ENCODE measurements at regions of chr9 and their contacts with region 1.

Region 1: DNA sequence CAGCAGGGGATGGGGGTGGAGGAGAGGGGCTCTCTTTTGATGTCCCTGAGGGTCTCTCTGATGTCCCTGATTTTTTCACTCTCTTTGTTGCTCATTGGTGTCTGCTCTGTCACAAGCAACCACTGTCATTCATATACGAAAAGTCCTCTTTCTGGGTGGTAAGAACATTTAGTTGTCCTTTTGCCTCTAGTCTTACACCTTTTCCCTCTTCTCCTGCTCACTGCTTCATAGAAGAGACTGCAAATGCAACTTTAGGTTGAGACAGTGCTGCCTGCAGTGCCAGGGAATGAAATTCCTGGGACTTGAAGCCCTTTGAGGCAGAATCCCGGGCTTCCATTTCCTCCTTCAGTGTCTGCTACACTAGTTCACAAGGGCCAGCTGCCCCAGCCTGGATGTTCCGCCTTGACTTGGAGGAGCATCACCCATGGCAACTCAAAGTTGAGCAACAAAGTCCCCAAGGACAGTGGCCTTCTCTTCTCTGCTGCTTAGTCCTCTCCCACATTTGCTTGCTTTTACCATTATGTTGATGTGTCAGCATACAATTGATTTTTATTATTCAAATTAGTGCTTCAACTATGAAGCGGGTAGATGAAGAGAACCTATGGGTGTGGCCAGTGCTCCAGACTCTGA is 94.7 kb upstream of the RUSC2 start:
- DNase-seq: no peak
- ATAC-seq: no peak
- H3K4me3 ChIP-seq: no peak overlapping the region
- H3K27ac ChIP-seq: no peak overlapping the region
- H3K4me1 ChIP-seq: no peaks in the 10 kb centered on the region
- H3K27me3 ChIP-seq: no peaks in the 10 kb centered on the region
- CTCF ChIP-seq: no peak

Region 2: GRCh38 chr9:35406183-35406956 is 11.2 kb after region 1 on chr9:
- CTCF ChIA-PET with region 1: no interaction called
- POLR2A ChIA-PET with region 1: interaction called, 14 read pairs
- intact Hi-C with region 1: no loop called
- DNase-seq: no peak
- ATAC-seq: no peak
- H3K4me3 ChIP-seq: no peak overlapping the region
- H3K27ac ChIP-seq: no peak overlapping the region
- H3K4me1 ChIP-seq: no peaks in the 10 kb centered on the region
- H3K27me3 ChIP-seq: no peaks in the 10 kb centered on the region
- CTCF ChIP-seq: no peak

Measured in PC-3 (cell line).